ENCODE measurements at regions of chr17 and their contacts with region 1.

Region 1: DNA sequence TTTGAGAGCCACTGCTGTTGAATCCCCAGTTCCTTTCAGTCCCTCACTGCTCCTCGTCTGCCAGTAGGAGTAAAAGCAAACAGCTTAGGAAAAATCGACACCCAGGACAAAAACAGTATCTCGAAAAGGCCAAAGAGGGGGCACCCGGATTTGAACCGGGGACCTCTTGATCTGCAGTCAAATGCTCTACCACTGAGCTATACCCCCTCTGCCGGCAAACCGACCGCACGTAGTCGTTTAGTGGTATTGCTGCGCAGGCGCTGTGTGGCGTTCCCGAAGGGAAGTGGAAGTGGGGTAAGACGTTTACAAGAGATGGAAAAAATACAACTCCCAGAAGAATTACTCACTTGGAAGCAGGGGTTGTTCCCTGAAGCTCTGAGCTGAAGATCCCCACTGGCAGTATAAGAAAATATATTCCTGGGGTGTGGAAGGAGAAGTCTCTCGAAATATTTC is 2.2 kb upstream of the PLXDC1 start:
- DNase-seq: peak; percentile 100
- H3K4me3 Mint-ChIP-seq: peak overlapping the region; percentile 95
- H3K27ac Mint-ChIP-seq: peak overlapping the region; percentile 99
- H3K4me1 Mint-ChIP-seq: peaks cover 29% of the 10 kb centered on the region
- H3K27me3 Mint-ChIP-seq: peaks cover 89% of the 10 kb centered on the region
- CTCF ChIP-seq: peak; percentile 28

Region 2: DNA sequence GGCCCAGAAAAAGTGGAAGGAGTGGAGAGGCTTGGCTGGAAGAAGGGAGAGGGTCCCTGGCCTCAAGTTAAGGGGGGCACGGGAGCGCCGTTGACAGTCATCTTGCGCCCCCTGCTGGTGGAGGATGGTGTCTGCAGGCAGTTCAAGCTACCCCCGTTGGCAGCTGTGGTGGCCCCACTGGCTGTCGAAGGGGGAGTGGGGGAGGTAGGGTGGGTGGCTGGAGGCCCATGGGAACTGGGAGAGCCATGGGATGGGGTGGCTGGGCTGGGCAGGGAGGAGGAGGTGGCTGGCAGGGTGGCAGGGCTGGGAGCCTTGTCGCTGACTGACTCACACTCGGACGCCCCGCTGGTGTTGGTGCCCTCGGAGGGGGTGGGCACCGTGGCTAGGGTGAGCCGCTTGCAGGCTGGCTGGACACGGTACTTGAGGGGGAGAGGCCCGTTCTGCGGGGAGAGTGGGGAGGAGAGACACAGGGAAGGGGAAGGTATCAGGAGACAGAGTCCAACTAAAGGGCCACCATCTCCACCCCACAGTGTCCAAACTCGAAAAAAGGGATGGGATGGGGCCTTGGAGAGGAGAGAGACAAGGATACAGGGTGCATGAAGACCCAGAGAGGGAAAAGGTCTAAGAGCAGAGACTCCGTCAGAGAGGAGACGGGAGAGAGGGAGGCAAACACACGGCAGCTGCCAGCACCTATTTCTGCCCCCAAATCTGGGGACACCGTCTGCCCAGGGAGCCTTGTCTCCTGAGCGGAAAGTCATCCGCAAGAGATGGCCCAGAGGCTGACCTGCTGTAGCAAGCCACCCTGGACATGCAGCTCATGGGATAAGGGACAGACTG is 418.2 kb before region 1 on chr17:
- CTCF ChIA-PET with region 1: interaction called, 12 read pairs
- intact Hi-C with region 1: no loop called
- DNase-seq: peak; percentile 93
- H3K4me3 Mint-ChIP-seq: no peak overlapping the region
- H3K27ac Mint-ChIP-seq: peak overlapping the region; percentile 15
- H3K4me1 Mint-ChIP-seq: peaks cover 44% of the 10 kb centered on the region
- H3K27me3 Mint-ChIP-seq: no peaks in the 10 kb centered on the region
- CTCF ChIP-seq: peak; percentile 100

Region 3: DNA sequence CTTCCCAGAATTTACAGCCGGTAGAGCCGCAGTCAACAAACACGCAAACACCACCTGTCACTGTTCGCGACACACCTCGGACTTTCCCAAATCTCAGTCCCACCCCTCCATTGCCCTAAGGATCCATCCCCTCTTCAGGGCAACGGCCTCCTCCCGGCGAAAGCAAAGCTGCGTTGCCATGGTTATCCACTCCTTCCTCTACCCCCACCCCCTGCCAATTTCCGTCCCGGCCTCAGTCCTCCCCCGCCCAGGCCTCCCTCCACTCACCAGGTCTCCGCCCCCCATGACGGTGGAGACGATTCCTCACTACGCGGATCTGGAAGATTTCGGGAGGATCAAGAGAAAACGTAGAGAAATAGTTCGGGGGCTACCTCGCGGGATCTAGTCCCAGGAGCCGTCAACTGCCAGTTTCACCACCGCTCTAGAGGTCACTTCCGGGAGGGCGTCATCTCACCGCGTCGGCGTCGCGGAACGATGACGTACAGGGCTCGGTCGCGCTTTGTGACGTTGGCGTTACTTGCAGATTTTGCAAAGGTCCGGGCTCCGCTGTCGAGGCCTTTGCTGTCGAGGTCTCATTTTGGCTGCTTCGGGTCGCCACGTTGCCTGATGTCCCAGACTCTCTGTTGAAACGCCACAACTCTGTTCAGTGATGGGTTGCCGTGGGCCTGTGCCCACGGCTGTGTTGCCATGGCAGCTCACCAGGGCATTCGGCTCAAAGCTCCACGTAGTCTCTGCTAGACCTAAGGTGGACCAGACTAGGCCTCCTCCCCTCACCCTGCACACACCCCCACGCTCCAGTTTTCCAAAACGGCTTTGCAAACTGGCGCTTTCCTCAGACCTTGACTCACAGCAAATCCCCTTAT is 328.5 kb before region 1 on chr17 and contains the start of gene CWC25:
- CTCF ChIA-PET with region 1: interaction called, 5 read pairs
- intact Hi-C with region 1: loop called (anchors 5 kb)
- DNase-seq: peak; percentile 100
- H3K4me3 Mint-ChIP-seq: peak within 1 kb of the TSS; percentile 87
- H3K27ac Mint-ChIP-seq: peak within 1 kb of the TSS; percentile 100
- H3K4me1 Mint-ChIP-seq: peaks cover 37% of the 10 kb centered on the region
- H3K27me3 Mint-ChIP-seq: no peaks in the 10 kb centered on the region
- CTCF ChIP-seq: no peak
- total RNA-seq, gene CWC25: 77.8 and 78.9 TPM in 2 replicates

Region 4: DNA sequence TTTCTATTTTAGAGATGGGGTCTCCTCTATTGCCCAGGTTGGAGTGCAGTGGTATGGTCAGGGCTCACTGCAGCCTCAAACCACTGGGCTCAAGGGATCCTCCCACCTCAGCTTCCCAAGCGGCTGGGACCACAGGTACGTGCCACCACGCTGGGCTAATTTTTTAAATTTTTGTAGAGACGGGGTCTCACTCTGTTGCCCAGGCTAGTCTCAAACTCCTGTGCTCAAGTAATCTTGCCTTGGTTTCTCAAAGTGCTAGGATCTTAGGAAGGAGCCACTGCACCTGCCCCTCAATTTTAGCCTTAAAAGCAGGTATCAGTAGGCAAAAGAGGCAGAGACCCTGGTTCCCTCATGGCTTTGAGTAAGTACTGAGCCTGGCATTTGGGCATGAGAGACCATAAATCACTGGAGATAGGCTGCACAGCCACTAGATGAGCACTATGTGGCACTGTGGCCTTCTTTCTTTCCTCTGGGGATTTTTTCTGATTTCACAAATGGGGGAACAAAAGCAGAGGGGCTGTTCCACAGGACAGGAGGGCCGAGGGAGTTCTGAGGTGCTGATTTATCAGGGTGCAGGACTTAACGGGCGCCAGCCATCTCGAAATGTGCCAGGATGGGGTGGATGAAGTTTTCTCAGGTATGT is 84.4 kb before region 1 on chr17:
- CTCF ChIA-PET with region 1: interaction called, 20 read pairs
- intact Hi-C with region 1: loop called (anchors 1 kb)
- DNase-seq: peak; percentile 67
- H3K4me3 Mint-ChIP-seq: no peak overlapping the region
- H3K27ac Mint-ChIP-seq: no peak overlapping the region
- H3K4me1 Mint-ChIP-seq: peaks cover 7% of the 10 kb centered on the region
- H3K27me3 Mint-ChIP-seq: peaks cover 89% of the 10 kb centered on the region
- CTCF ChIP-seq: peak; percentile 92

Region 5: GRCh38 chr17:39199820-39200069 is 46.1 kb after region 1 on chr17:
- CTCF ChIA-PET with region 1: interaction called, 34 read pairs
- intact Hi-C with region 1: no loop called
- DNase-seq: peak; percentile 99
- H3K4me3 Mint-ChIP-seq: peak overlapping the region; percentile 86
- H3K27ac Mint-ChIP-seq: peak overlapping the region; percentile 99
- H3K4me1 Mint-ChIP-seq: peaks cover 41% of the 10 kb centered on the region
- H3K27me3 Mint-ChIP-seq: no peaks in the 10 kb centered on the region
- CTCF ChIP-seq: no peak

Region 6: GRCh38 chr17:39281806-39282205 is 128.2 kb after region 1 on chr17:
- CTCF ChIA-PET with region 1: interaction called, 12 read pairs
- intact Hi-C with region 1: no loop called
- DNase-seq: no peak
- H3K4me3 Mint-ChIP-seq: no peak overlapping the region
- H3K27ac Mint-ChIP-seq: peak overlapping the region; percentile 45
- H3K4me1 Mint-ChIP-seq: peaks cover 14% of the 10 kb centered on the region
- H3K27me3 Mint-ChIP-seq: no peaks in the 10 kb centered on the region
- CTCF ChIP-seq: no peak

Region 7: DNA sequence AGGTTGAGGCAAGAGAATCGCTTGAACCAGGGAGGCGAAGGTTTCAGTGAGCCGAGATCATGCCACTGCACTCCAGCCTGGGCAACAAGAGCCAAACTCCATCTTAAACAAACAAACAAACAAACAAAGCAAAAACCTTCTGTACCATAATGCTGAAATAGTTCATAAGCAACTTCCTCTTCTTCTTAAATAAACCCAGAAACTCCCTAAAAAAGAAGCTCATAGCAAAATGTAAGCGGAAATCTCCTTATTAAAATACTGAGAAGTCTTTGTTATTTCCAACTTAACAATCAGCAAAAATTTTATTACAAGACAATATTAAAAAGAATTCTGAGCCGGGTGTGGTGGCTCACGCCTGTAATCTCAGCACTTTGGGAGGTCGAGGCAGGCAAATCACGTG is 165.0 kb after region 1 on chr17:
- CTCF ChIA-PET with region 1: no interaction called
- intact Hi-C with region 1: no loop called
- DNase-seq: no peak
- H3K4me3 Mint-ChIP-seq: no peak overlapping the region
- H3K27ac Mint-ChIP-seq: no peak overlapping the region
- H3K4me1 Mint-ChIP-seq: no peaks in the 10 kb centered on the region
- H3K27me3 Mint-ChIP-seq: no peaks in the 10 kb centered on the region
- CTCF ChIP-seq: no peak

Region 8: GRCh38 chr17:39443326-39443725 is 289.7 kb after region 1 on chr17:
- CTCF ChIA-PET with region 1: no interaction called
- intact Hi-C with region 1: no loop called
- DNase-seq: no peak
- H3K4me3 Mint-ChIP-seq: no peak overlapping the region
- H3K27ac Mint-ChIP-seq: no peak overlapping the region
- H3K4me1 Mint-ChIP-seq: peaks cover 7% of the 10 kb centered on the region
- H3K27me3 Mint-ChIP-seq: no peaks in the 10 kb centered on the region
- CTCF ChIP-seq: no peak